ENCODE measurements at regions of chr6 and their contacts with region 1.

Region 1: DNA sequence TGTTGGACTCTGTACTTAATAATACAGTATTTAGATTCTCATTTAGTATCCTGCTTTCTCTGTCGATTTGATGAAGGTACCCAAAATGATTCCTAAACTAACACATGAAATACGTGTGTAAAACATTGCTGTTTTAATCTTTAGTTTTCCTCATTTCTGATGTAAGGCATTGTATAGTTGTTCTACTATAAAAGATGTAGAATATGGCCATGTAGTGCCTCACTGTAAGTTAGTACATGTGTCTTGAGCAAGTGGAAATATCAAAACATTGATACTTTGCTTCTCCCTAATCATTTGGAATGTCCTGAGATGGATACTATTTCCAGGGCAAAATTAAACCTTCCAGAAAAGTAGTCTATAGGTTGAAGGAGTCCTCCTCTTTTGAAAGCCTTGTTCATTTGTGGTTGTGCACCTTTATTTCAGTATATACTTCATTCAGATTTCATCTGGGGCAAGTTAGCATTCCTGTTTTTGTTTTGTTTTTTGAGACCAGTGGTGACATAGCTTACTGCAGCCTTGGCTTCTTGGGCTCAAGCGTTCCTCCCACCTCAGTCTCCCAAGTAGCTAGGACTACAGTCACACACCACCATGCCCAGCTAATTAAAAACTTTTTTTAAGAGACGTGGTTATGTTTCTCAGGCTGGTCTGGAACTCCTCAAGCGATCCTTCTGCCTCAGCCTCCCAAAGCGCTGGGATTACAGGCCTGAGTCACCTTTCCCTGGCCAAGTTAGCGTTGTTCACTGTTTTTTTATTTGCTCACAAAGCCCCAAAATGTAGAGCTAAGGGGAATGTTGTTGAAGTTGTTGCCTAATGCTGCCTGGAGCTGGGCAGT is 11.6 kb downstream of the SRSF3 start:
- DNase-seq: no peak
- H3K4me3 Mint-ChIP-seq: no peak overlapping the region
- H3K27ac Mint-ChIP-seq: peak overlapping the region; percentile 66
- H3K4me1 Mint-ChIP-seq: peaks cover 60% of the 10 kb centered on the region
- H3K27me3 Mint-ChIP-seq: no peaks in the 10 kb centered on the region

Region 2: DNA sequence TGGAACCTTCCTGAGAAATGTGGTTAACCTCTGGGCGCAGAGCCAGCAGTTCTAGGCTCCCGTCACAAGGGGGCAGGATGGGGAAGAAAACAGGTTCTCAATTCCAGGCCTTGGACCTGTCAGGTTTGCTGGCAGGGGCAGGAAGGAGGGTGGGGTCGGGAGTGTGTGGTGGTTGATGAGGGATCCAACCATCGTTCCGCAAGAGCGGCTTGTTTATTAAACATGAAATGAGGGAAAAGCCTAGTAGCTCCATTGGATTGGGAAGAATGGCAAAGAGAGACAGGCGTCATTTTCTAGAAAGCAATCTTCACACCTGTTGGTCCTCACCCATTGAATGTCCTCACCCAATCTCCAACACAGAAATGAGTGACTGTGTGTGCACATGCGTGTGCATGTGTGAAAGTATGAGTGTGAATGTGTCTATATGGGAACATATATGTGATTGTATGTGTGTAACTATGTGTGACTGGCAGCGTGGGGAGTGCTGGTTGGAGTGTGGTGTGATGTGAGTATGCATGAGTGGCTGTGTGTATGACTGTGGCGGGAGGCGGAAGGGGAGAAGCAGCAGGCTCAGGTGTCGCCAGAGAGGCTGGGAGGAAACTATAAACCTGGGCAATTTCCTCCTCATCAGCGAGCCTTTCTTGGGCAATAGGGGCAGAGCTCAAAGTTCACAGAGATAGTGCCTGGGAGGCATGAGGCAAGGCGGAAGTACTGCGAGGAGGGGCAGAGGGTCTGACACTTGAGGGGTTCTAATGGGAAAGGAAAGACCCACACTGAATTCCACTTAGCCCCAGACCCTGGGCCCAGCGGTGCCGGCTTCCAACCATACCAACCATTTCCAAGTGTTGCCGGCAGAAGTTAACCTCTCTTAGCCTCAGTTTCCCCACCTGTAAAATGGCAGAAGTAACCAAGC is 18.0 kb after region 1 on chr6:
- CTCF ChIA-PET with region 1: interaction called, 11 read pairs
- POLR2A ChIA-PET with region 1: no interaction called
- DNase-seq: peak; percentile 82
- H3K4me3 Mint-ChIP-seq: no peak overlapping the region
- H3K27ac Mint-ChIP-seq: peak overlapping the region; percentile 7
- H3K4me1 Mint-ChIP-seq: peaks cover 27% of the 10 kb centered on the region
- H3K27me3 Mint-ChIP-seq: no peaks in the 10 kb centered on the region

Measured in activated CD4-positive, alpha-beta T cell treated with anti-CD3 and anti-CD28 coated beads, Interleukin-2, amount 10 ng/mL, durations not matched to agents 7 days and 5 days (primary cell).